ENCODE measurements at regions of chr5 and their contacts with region 1.

Region 1: DNA sequence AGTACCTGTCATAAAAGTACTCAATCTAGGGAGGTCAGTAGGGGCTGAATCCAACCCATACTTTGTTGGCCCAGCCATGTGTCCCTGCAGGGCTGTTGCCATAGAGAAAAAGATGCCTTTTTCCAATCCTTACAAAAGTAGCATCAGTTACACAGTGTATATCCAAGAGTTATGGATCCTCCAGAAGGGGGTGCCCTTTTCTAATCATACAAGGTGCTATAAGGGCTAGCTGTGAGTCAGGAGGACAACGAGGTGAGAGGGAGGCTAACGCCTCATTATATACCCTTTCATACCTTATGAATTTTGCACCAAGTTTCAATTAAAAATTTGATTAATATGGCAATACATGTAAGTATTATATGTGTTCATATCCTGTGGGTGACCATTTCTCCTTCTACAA is 4.8 kb downstream of the KIAA0825 start:
- DNase-seq: peak; percentile 13
- ATAC-seq: no peak
- H3K4me3 ChIP-seq: no peak overlapping the region
- H3K27ac ChIP-seq: no peak overlapping the region
- H3K4me1 ChIP-seq: no peaks in the 10 kb centered on the region
- H3K27me3 ChIP-seq: no peaks in the 10 kb centered on the region
- CTCF ChIP-seq: peak; percentile 30; the same call in 1 of the 2 replicates
- POLR2A ChIP-seq: no peak
- RAD21 ChIP-seq: no peak

Region 2: GRCh38 chr5:94849821-94850736 is 236.5 kb after region 1 on chr5:
- CTCF ChIA-PET with region 1: no interaction called
- POLR2A ChIA-PET with region 1: no interaction called
- dilution Hi-C with region 1: no loop called
- in situ Hi-C with region 1: no loop called
- intact Hi-C with region 1: loop called (anchors 2 kb)
- DNase-seq: peak; percentile 66
- ATAC-seq: peak; percentile 96
- H3K4me3 ChIP-seq: no peak overlapping the region
- H3K27ac ChIP-seq: no peak overlapping the region
- H3K4me1 ChIP-seq: no peaks in the 10 kb centered on the region
- H3K27me3 ChIP-seq: no peaks in the 10 kb centered on the region
- CTCF ChIP-seq: peak; percentile 82
- POLR2A ChIP-seq: no peak
- RAD21 ChIP-seq: peak; percentile 86

Region 3: GRCh38 chr5:96566833-96567587 is 1953.4 kb after region 1 on chr5:
- CTCF ChIA-PET with region 1: no interaction called
- POLR2A ChIA-PET with region 1: interaction called, 13 read pairs
- dilution Hi-C with region 1: no loop called
- in situ Hi-C with region 1: no loop called
- intact Hi-C with region 1: no loop called
- DNase-seq: peak; percentile 43
- ATAC-seq: peak; percentile 27
- H3K4me3 ChIP-seq: no peak overlapping the region
- H3K27ac ChIP-seq: peak overlapping the region; percentile 51; the same call in 1 of the 2 replicates
- H3K4me1 ChIP-seq: peaks cover 15% of the 10 kb centered on the region
- H3K27me3 ChIP-seq: no peaks in the 10 kb centered on the region
- CTCF ChIP-seq: no peak
- POLR2A ChIP-seq: no peak
- RAD21 ChIP-seq: no peak

Measured in IMR-90 (cell line).